HepG2 (cell line): ENCODE measurements at regions of chr6 and their contacts with region 1.

Region 1: DNA sequence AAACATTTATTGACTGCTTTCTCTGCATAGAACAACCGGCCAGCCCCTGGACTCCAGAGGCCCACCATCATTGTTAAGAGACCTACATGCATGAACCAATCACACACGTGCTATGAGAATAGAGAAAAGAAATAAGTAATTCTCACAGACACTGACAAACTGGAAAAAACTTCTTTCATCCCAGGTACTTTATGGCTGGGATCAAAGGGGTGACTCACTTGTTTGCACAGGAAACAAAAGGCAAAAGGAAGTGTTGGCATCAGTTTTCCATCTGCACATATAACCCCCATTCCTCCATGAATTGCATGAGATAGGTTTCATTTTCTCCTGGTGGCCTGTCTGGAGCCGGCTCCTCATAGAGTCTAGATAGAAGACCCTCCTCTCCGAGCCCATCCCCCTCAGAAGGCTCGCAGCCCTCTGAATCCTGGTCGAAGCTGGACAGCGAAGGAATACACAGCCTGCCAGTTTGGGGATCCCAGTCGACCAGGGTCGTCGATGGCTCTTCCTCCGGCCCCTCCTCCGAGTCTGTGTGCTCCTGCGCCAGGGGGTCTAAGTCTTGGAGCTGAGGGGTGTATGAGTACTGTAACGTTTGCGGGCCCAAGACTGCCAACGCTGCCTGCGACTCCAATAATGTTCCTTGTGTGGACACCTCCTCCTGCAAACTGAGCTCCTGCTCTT is 43.3 kb downstream of the IL20RA start:
- DNase-seq: peak; percentile 85
- ATAC-seq: peak; percentile 81
- H3K4me3 ChIP-seq: no peak overlapping the region; a peak in 1 of 6 replicates
- H3K27ac ChIP-seq: no peak overlapping the region
- H3K4me1 ChIP-seq: peaks cover 13% of the 10 kb centered on the region
- H3K27me3 ChIP-seq: peaks cover 0 to 16% of the 10 kb centered on the region in 2 experiments; a peak in 3 of 5 replicates
- CTCF ChIP-seq: no peak
- EP300 ChIP-seq: peak in 1 of 2 experiments; percentile 72; a peak in 1 of 4 replicates
- POLR2A ChIP-seq: no peak
- RAD21 ChIP-seq: no peak

Region 2: DNA sequence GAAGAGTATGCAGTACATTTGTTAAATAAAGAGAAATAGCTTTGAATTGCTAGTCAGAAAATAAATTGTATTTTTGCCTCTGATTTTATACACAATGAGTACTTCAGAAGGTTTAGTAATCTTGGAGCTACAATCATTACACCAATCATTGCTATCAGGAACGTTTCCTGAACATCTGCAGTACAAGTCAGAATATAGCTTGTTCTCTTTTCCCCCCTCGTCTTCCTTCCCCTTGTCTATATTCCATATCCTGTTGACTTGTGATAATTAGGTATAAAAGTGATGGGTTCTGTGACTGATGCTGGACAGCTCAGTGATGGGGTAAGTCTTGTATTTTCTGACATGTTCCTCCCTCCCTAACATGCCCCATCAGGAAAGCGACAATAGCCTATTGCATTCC is 1597.9 kb before region 1 on chr6:
- CTCF ChIA-PET with region 1: no interaction called
- POLR2A ChIA-PET with region 1: no interaction called
- in situ Hi-C with region 1: no loop called
- intact Hi-C with region 1: loop called (anchors 5 kb)
- DNase-seq: no peak
- ATAC-seq: no peak
- H3K4me3 ChIP-seq: no peak overlapping the region
- H3K27ac ChIP-seq: no peak overlapping the region
- H3K4me1 ChIP-seq: no peaks in the 10 kb centered on the region
- H3K27me3 ChIP-seq: no peaks in the 10 kb centered on the region
- CTCF ChIP-seq: no peak
- EP300 ChIP-seq: no peak
- POLR2A ChIP-seq: no peak
- RAD21 ChIP-seq: no peak